Dorsolateral prefrontal cortex (tissue), 120 donors: ENCODE measurements at regions of chr15 and their contacts with region 1.

Region 1: DNA sequence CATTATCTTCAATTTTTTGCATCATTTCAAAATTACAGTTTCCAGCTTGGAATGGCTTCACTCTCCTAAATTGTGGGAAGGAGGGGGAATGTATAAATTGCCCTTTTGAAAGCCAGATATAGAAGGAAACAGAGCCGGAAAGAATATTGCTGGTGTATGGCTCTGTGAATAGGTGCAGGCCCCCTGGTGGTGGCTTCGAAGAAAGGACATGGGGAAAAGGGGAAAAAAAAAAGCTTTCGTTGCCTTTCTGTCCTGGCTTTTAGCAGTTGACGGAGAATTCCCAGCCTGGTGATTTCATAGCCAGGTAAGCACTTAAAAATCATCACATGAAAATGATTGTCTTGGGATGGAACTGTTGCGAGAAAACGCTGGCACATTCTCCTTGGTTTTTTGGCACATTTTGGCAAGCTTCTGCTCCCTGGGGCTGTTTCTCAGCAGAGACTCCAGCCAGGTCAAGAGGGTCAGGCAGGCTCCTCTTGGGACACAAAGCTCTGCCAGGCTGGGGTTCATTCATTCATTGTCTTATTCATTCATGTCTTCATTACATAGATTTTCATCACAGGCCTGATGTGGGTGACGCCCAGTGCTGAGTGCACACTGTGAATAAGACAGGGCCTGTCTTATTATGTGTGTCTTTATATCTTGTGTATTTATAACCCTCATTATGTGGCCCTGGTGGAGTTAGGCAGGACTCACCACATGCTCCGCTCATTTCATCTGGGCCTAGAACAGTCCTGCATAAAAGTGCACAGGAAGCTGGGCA is 300.0 kb upstream of the TPM1 start:
- DNase-seq: peak in 6 of 10 donors; percentile 44 to 60 (median 54)
- H3K4me3 ChIP-seq: peak overlapping the region in 56 of 59 donors; percentile 4 to 65 (median 42)
- H3K27ac ChIP-seq: peak overlapping the region; percentile 30 to 95 (median 83)
- H3K27me3 ChIP-seq: no peaks in the 10 kb centered on the region
- CTCF ChIP-seq: peak; percentile 71 to 92 (median 83)

Region 2: GRCh38 chr15:62549345-62549970 is 193.1 kb before region 1 on chr15:
- intact Hi-C with region 1: loop called in 1 of 2 experiments (anchors 10 kb)
- DNase-seq: no peak
- H3K4me3 ChIP-seq: no peak overlapping the region
- H3K27ac ChIP-seq: no peak overlapping the region
- H3K27me3 ChIP-seq: no peaks in the 10 kb centered on the region
- CTCF ChIP-seq: peak in 46 of 56 donors; percentile 13 to 63 (median 38)